ENCODE measurements at regions of chr1 and their contacts with region 1.

Region 1: DNA sequence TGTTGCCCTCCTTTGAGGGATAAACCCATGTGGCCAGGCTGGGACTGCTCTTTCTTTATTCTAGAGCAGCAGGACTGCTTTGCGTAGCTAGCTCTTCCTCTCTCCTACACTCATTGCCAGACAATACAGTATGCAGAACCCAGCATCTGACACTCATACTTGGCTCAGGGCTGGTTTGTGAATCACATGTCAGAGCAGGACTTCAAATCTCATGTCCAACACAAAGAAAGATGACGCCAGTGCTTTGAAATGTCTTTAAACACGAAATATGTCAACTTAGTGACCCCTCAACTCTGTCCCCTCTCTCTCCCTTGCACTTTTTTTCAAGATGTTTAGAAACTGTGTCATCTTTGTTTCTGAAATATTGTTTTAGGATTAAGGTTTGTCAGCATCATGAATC is 135.0 kb downstream of the TGFB2 start:
- DNase-seq: no peak
- H3K4me3 ChIP-seq: no peak overlapping the region
- CTCF ChIP-seq: no peak

Region 2: GRCh38 chr1:218433744-218434143 is 46.4 kb before region 1 on chr1:
- in situ Hi-C with region 1: loop called (anchors 5 kb)
- DNase-seq: no peak
- H3K4me3 ChIP-seq: no peak overlapping the region
- CTCF ChIP-seq: no peak

Measured in astrocyte of the cerebellum (primary cell).